ENCODE measurements at regions of chr16 and their contacts with region 1.

Region 1: DNA sequence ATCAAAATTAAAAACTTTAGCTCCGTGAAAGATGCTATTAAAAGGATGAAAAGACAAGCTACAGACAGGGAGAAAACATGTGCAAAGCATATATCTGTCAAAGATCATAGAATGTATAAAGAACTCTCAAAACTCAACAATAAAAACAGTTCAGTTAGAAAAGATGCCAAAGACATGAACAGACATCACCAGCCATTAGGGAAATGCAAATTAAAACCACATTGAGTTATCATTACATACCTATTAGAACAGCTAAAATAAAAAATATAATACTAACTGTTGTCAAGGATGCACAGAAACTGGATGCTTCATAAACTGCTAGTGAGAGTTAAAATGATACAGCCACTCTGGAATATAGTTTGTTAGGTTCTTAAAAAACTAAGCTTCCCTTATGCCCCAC is 58.8 kb downstream of the NFATC3 start:
- DNase-seq: no peak
- H3K4me3 ChIP-seq: no peak overlapping the region
- H3K27ac ChIP-seq: no peak overlapping the region
- H3K4me1 ChIP-seq: peaks cover 0 to 11% of the 10 kb centered on the region in 2 donors
- H3K27me3 ChIP-seq: no peaks in the 10 kb centered on the region
- CTCF ChIP-seq: no peak

Region 2: DNA sequence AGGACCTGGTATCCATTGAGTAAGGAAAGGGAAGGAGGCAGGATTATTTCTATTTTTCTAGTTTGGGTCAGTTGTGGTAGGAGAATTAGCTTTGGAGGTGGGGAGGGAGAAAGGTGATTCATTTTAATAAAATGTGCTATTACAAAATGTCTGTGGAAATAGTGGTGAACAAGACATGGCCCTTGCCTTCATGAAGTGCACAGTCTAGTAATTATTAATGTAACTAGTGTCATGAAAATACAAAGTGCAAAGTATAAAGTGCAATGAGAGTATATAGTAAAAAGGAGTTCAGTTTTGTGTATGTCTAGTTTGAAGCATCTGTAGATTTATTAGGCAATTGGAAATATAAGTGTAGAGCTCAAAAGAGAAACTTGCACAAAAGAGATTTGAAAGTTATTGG is 46.9 kb before region 1 on chr16:
- intact Hi-C with region 1: loop called (anchors 5 kb)
- DNase-seq: no peak
- H3K4me3 ChIP-seq: no peak overlapping the region
- H3K27ac ChIP-seq: no peak overlapping the region
- H3K4me1 ChIP-seq: peaks cover 0 to 30% of the 10 kb centered on the region in 2 donors
- H3K27me3 ChIP-seq: no peaks in the 10 kb centered on the region
- CTCF ChIP-seq: no peak

Region 3: DNA sequence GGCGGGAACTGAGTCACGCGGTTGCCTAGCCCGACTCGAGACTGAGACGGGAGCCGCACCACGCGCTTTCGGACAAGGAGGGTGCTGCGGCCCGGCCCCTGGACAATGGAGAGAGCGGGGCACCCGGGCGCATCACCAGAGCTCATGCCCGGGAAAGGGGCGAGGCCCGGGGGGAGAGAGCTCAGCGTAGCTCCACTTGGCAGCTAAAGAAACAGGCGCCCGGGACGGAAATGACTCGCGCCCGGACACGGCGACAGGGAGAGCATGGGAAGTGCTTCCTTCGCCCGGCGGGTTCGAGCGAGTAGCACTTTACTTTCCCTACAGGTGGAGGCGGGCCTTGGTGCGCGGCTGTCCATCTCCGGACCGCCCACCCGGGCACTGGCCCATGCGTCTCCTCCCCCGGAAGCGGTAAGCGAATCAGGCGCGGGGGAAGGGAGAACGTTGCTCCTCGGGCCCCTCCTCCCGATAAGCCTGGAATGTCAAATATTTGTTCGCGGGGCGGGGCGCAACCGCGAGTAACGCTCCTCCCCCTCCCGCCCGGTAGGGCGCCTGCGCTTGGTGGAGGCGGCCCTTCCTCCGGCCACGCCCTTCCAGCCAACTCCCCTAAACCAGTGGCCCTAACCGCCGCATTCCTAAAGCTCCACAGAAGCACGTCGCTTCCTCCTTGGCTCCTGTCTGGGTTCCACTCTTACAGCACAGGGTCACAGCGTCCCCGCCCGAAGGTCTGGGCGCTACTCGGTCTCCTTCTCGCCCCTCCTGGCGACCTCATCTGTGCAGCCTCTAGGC is 93.4 kb after region 1 on chr16:
- intact Hi-C with region 1: no loop called
- DNase-seq: peak; percentile 94 to 99
- H3K4me3 ChIP-seq: peak overlapping the region; percentile 54 to 69
- H3K27ac ChIP-seq: peak overlapping the region; percentile 78 to 92
- H3K4me1 ChIP-seq: peaks cover 11 to 16% of the 10 kb centered on the region in 2 donors
- H3K27me3 ChIP-seq: no peaks in the 10 kb centered on the region
- CTCF ChIP-seq: peak in 1 of 3 experiments; percentile 3

Measured in ascending aorta (tissue), 2 donors.